ENCODE measurements at regions of chr14 and their contacts with region 1.

Region 1: GRCh38 chr14:45531022-45531421 is 278.0 kb upstream of the MIS18BP1 start:
- DNase-seq: no peak

Region 2: GRCh38 chr14:43853541-43853940 is 1677.5 kb before region 1 on chr14:
- intact Hi-C with region 1: loop called in 1 of 2 experiments (anchors 5 kb)
- DNase-seq: no peak

Region 3: DNA sequence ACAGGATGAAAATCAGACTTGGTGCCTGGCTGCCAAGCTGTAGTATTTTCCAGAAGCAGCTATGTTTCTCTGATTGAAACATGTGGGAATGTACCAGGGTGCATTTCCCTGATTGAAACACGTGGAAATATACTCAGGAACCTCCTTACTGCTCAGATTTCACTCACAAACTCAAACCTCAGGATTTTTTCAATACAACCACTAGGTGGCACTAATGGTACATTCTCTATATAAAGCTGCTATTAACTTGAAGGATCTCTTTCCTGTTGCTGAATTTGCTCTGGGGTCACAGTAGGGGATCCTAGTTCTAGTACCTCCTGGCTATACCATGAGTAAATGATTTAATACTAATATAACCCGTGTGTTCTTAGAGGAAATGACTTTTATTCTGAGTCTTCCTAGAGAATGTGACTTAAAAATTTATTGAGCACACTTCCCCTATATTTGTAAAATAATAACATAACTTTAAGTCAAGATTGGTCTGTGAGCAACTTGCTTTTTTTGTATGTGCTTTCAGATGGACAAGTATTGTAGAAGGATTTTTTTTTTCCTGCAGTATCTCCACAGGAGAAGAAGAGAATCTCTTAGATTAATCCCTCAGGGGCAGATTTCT is 104.2 kb before region 1 on chr14:
- intact Hi-C with region 1: no loop called
- DNase-seq: no peak

Region 4: GRCh38 chr14:45559618-45560017 is 28.6 kb after region 1 on chr14:
- intact Hi-C with region 1: no loop called
- DNase-seq: no peak

Region 5: GRCh38 chr14:45766247-45766646 is 235.2 kb after region 1 on chr14:
- intact Hi-C with region 1: no loop called
- DNase-seq: no peak

Region 6: GRCh38 chr14:46490238-46490685 is 959.2 kb after region 1 on chr14:
- intact Hi-C with region 1: no loop called
- DNase-seq: no peak

Measured in posterior vena cava (tissue), 2 donors.